ENCODE measurements at regions of chr4 and their contacts with region 1.

Region 1: GRCh38 chr4:98260579-98261290 is 449 bp upstream of the RAP1GDS1 start:
- DNase-seq: peak; percentile 95
- H3K4me3 Mint-ChIP-seq: peak overlapping the region; percentile 93
- H3K27ac Mint-ChIP-seq: peak overlapping the region; percentile 94
- H3K4me1 Mint-ChIP-seq: peaks cover 43% of the 10 kb centered on the region
- H3K27me3 Mint-ChIP-seq: no peaks in the 10 kb centered on the region

Region 2: DNA sequence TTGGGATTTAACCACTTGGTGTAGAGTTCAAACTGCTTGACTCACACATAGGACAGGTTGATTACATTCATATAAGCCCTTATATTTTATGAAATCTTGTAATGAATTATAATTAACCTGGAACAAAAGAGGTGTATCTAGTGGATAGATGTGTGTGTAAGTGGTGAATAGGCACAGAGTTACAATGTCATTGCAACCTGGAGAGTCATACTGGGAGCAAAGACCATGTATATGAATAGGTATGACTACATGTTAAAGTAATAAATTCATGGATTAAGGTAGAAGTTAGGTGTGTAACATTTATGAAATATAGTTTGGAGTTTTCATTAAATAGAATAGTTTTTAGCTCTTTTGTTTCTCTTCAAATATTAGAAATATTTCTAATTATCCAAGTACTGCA is 26.6 kb after region 1 on chr4:
- CTCF ChIA-PET with region 1: interaction called, 3 read pairs
- intact Hi-C with region 1: loop called (anchors 1 kb)
- DNase-seq: no peak
- H3K4me3 Mint-ChIP-seq: no peak overlapping the region
- H3K27ac Mint-ChIP-seq: no peak overlapping the region
- H3K4me1 Mint-ChIP-seq: peaks cover 43% of the 10 kb centered on the region
- H3K27me3 Mint-ChIP-seq: no peaks in the 10 kb centered on the region

Region 3: GRCh38 chr4:98377559-98377958 is 116.8 kb after region 1 on chr4:
- CTCF ChIA-PET with region 1: no interaction called
- intact Hi-C with region 1: loop called (anchors 2 kb)
- DNase-seq: no peak
- H3K4me3 Mint-ChIP-seq: no peak overlapping the region
- H3K27ac Mint-ChIP-seq: no peak overlapping the region
- H3K4me1 Mint-ChIP-seq: peaks cover 7% of the 10 kb centered on the region
- H3K27me3 Mint-ChIP-seq: no peaks in the 10 kb centered on the region

Region 4: DNA sequence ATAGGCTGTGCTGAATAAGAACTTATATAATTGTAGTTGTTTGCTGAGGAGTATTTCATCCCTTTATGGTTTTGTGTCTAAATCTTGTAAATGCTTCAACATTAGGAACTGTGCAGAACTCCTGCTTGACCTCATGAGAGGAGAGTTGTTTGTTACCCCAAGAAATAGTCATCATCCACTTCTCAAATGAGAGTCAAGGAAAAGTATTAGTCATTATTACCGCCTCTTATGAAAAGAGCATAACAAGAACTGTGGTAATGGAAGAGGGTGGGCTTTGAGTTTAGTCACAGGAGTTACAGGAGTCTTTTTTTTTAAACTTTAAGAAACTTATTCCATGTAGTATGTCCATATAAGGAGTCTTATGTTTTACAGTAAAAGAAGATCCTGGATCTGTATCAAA is 133.4 kb after region 1 on chr4:
- CTCF ChIA-PET with region 1: no interaction called
- intact Hi-C with region 1: no loop called
- DNase-seq: no peak
- H3K4me3 Mint-ChIP-seq: no peak overlapping the region
- H3K27ac Mint-ChIP-seq: no peak overlapping the region
- H3K4me1 Mint-ChIP-seq: peaks cover 2% of the 10 kb centered on the region
- H3K27me3 Mint-ChIP-seq: no peaks in the 10 kb centered on the region

Region 5: DNA sequence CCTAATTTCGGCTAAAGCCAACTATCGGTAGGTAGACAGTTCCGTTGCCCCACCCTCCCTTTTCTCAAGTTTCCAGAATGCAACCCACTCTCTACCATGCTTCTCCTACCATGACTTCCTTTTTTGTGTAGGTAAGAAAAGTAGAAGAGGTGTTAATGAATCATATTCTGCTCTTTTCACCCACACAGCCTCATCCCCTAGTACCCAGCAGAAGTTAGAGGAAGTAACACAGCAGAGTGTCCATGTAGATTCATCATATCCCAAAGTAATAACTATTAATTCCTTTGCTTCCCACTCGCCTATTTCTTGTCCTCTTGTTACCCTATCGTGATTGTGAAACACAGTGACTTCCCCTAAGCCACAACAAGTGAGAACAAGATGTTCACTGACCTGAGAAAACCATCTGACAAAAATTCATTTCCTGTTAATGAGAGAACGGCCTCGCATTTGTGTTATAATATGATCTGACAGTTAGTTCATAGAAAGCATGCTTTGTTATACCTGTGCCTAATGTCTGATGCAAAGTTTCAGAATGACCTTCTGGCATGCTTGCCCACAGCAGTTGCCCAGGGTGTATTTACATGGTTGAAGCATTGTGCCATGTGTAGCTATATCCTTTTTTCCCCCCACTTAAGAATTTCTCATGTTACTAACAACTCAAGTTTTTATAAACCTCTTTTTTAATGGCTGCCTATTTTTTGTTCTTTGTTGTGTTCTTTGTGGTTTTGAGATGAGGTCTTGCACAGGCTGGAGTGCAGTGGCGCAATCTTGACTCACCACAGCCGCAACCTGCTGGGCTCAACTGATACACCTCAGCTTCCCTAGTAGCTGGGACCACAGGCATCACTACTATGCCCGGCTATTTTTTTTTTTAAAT is 186.0 kb after region 1 on chr4:
- CTCF ChIA-PET with region 1: no interaction called
- intact Hi-C with region 1: loop called (anchors 2 kb)
- DNase-seq: peak; percentile 72
- H3K4me3 Mint-ChIP-seq: peak overlapping the region; percentile 48
- H3K27ac Mint-ChIP-seq: peak overlapping the region; percentile 76
- H3K4me1 Mint-ChIP-seq: peaks cover 31% of the 10 kb centered on the region
- H3K27me3 Mint-ChIP-seq: no peaks in the 10 kb centered on the region

Region 6: DNA sequence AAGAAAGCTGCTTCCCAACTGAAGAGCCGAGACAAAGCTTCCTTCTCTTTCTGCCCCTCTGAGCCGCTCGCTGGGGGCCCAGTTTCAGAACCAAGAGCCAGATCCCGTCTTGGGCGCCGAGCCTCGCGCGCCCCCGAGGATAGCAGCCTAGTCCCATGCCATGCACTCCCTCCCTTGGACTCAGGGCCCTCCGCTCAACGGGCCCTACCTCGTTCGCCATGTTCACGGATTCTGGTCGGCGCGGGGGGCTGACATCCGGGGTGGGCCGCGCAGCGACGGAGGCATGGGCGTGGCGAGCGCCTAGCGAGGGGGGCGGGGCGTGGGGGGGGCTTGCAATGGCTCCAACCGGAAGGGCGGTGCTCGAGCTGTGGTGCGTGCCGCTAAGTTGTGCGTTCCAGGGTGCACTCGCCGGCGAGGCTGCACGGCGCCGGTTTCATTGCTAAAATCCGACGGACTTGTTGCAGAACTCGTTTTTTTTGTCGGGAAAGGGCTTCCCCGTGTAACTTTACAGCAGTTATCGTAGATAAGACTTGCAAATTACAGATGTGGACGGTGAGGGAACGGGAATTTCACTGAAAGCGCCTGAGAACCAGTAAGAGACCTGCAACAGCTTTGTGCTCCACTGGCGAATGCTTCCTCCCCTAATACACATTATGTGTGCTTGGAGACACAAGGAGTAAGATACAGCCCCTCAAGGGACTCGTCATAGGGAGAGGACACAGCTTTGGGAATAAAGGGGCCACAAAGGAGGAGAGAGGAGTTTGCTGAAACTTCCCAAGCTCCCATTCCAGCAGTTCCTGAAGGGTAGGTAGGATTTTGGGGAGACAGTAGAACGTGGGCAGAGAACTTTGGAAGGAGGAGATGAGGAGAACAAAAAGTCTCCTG is 828.0 kb after region 1 on chr4 and contains the start of gene ADH5:
- CTCF ChIA-PET with region 1: no interaction called
- intact Hi-C with region 1: loop called (anchors 2 kb)
- DNase-seq: peak; percentile 92
- H3K4me3 Mint-ChIP-seq: peak within 1 kb of the TSS; percentile 96
- H3K27ac Mint-ChIP-seq: peak within 1 kb of the TSS; percentile 95
- H3K4me1 Mint-ChIP-seq: peaks cover 32% of the 10 kb centered on the region
- H3K27me3 Mint-ChIP-seq: no peaks in the 10 kb centered on the region
- total RNA-seq, gene ADH5: 94.3 to 99.9 TPM